Calu3 (cell line): ENCODE measurements at regions of chrX and their contacts with region 1.

Region 1: GRCh38 chrX:68710870-68711576 is 63.6 kb downstream of the STARD8 start:
- DNase-seq: peak; percentile 57
- H3K4me3 Mint-ChIP-seq: no peak overlapping the region
- H3K27ac Mint-ChIP-seq: no peak overlapping the region
- H3K4me1 Mint-ChIP-seq: no peaks in the 10 kb centered on the region
- H3K27me3 Mint-ChIP-seq: peaks cover 34% of the 10 kb centered on the region
- CTCF ChIP-seq: peak; percentile 59

Region 2: GRCh38 chrX:68183612-68184214 is 527.3 kb before region 1 on chrX:
- CTCF ChIA-PET with region 1: interaction called, 4 read pairs
- intact Hi-C with region 1: loop called (anchors 5 kb)
- DNase-seq: peak; percentile 20
- H3K4me3 Mint-ChIP-seq: no peak overlapping the region
- H3K27ac Mint-ChIP-seq: no peak overlapping the region
- H3K4me1 Mint-ChIP-seq: peaks cover 25% of the 10 kb centered on the region
- H3K27me3 Mint-ChIP-seq: no peaks in the 10 kb centered on the region
- CTCF ChIP-seq: peak; percentile 55

Region 3: GRCh38 chrX:68511255-68511654 is 199.8 kb before region 1 on chrX:
- CTCF ChIA-PET with region 1: interaction called, 3 read pairs
- intact Hi-C with region 1: loop called (anchors 1 kb)
- DNase-seq: peak; percentile 48
- H3K4me3 Mint-ChIP-seq: no peak overlapping the region
- H3K27ac Mint-ChIP-seq: no peak overlapping the region
- H3K4me1 Mint-ChIP-seq: peaks cover 17% of the 10 kb centered on the region
- H3K27me3 Mint-ChIP-seq: no peaks in the 10 kb centered on the region
- CTCF ChIP-seq: no peak

Region 4: DNA sequence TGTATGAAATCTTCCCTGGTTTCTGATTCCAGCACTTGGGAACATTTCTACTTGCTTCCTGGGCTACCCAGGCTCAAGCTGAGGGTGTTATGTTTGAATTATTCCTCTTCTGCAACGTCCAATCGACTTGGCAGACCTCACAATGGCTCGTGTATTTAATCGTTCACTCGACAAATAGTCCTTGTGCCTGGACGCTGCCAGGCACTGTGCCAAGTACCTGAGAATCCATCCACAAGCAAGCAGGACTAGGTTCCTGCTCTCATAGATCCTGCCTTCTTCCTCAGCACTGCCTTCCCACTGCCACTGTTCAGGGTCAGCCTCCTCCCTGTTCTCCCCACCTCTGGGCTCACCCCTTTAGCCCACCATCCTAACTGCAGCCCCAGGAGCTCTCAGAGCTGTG is 231.1 kb after region 1 on chrX:
- CTCF ChIA-PET with region 1: no interaction called
- intact Hi-C with region 1: no loop called
- DNase-seq: no peak
- H3K4me3 Mint-ChIP-seq: no peak overlapping the region
- H3K27ac Mint-ChIP-seq: no peak overlapping the region
- H3K4me1 Mint-ChIP-seq: peaks cover 24% of the 10 kb centered on the region
- H3K27me3 Mint-ChIP-seq: no peaks in the 10 kb centered on the region
- CTCF ChIP-seq: no peak